ENCODE measurements at regions of chr3 and their contacts with region 1.

Region 1: DNA sequence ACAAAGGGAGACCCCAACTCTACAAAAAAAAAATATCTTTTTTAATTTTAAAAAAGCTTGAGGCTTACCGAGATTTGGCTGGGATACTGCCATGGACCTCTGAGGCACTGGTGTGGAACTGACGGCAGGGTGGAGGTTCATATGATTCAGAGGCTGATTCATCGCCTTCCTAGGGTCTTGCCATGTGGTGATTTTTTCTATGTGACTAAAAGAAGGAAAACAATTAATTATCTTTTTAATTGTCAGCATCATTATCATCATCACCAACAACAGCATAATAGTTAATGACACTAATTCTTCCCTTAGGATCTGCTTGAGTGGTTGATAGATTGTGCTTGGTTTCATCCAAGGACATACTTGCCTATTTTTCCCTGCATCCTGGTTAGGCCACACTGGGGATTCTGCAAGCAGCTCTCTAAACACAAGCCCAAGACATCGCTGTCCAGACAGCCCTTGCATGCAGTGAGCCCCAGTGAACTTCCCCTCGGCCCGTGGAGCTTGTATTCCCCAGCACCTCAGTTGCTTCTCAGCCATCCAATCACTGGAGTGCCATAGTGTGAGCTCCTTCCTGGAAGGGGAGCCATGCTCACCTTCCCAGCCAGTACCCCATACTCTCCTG is 84.9 kb downstream of the WWTR1 start:
- DNase-seq: no peak
- H3K4me3 ChIP-seq: no peak overlapping the region
- H3K4me3 Mint-ChIP-seq: no peak overlapping the region
- H3K27ac ChIP-seq: no peak overlapping the region
- H3K27ac Mint-ChIP-seq: no peak overlapping the region
- H3K4me1 ChIP-seq: peaks cover 15% of the 10 kb centered on the region
- H3K4me1 Mint-ChIP-seq: peaks cover 0 to 15% (median 10%) of the 10 kb centered on the region in 4 donors
- H3K27me3 ChIP-seq: no peaks in the 10 kb centered on the region
- H3K27me3 Mint-ChIP-seq: no peaks in the 10 kb centered on the region

Region 2: DNA sequence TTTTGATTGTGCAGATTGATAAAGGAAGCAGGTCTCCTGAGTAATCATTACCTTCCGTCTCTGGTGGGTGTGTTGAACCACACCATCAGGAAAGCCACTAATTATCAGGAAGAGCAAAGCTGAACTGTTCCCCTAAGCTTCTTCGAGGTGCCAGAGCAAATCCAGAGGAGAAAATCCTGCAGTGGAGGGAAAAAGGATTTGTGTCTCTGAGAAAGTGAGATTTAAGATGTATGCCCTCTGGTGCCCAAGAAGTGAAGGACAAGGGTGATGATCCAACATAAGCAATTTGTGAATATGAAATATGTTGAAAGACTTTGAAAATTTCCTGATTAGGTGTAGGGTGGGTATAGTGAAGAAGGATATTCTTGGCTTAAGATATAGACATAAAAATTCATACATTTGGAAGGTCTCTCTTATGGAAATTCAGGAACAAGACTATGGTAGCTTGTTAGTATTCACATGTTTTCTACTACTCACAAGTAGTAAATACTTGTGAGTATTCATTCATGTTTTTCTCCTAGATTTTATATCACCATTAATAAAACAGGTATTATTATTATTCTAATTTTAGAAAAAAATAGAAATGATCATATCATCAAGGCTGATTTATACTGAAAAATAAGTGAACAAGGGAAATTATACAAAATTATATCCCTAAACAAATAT is 144.6 kb after region 1 on chr3:
- CTCF ChIA-PET with region 1: interaction called, 5 read pairs
- POLR2A ChIA-PET with region 1: no interaction called
- intact Hi-C with region 1: loop called (anchors 2 kb)
- DNase-seq: peak in 4 of 5 donors; percentile 7 to 26 (median 16)
- H3K4me3 ChIP-seq: no peak overlapping the region
- H3K4me3 Mint-ChIP-seq: peak overlapping the region in 1 of 8 donors; percentile 4
- H3K27ac ChIP-seq: no peak overlapping the region
- H3K27ac Mint-ChIP-seq: peak overlapping the region in 1 of 7 donors; percentile 10
- H3K4me1 ChIP-seq: no peaks in the 10 kb centered on the region
- H3K4me1 Mint-ChIP-seq: peaks cover 0 to 3% (median 0%) of the 10 kb centered on the region in 4 donors
- H3K27me3 ChIP-seq: no peaks in the 10 kb centered on the region
- H3K27me3 Mint-ChIP-seq: no peaks in the 10 kb centered on the region

Measured in CD4-positive, alpha-beta memory T cell (primary cell).